Heart right ventricle (tissue), 16 donors: ENCODE measurements at regions of chr1 and their contacts with region 1.

Region 1: GRCh38 chr1:226736908-226737818 is 1.9 kb downstream of the ITPKB start:
- DNase-seq: peak; percentile 42 to 49
- ATAC-seq: peak; percentile 5 to 62 (median 30)
- H3K4me3 ChIP-seq: peak overlapping the region; percentile 54 to 98 (median 82)
- H3K27ac ChIP-seq: peak overlapping the region; percentile 73 to 97 (median 91)
- H3K4me1 ChIP-seq: peaks cover 4 to 60% (median 55%) of the 10 kb centered on the region in 9 donors
- H3K27me3 ChIP-seq: no peaks in the 10 kb centered on the region
- CTCF ChIP-seq: peak in 4 of 9 donors; percentile 13 to 35 (median 17)

Region 2: DNA sequence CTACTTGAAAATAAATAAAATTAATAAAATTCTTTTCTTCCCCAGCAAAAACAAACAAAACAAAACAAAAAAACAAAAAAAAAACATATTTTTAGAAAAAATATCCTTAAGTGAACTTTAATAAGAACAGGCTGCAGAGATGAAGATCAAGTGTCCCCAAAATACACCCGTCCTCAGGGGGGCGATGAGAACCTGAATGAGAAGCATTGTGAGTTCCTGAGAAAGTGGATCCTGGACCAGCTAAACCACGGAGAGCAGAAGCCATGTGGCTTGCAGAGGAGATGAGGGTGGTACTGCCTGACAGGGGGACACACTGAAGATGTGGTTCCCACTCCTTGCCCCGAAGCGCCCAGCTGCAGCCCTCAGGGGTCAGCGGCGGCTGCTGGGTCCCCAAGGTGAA is 87.4 kb before region 1 on chr1:
- intact Hi-C with region 1: loop called in 2 of 10 experiments (anchors 10 kb)
- DNase-seq: no peak
- ATAC-seq: peak in 5 of 8 donors; percentile 13 to 39 (median 25)
- H3K4me3 ChIP-seq: peak overlapping the region in 1 of 10 donors; percentile 5
- H3K27ac ChIP-seq: peak overlapping the region in 6 of 10 donors; percentile 7 to 70 (median 50)
- H3K4me1 ChIP-seq: peaks cover 12 to 47% (median 31%) of the 10 kb centered on the region in 9 donors
- H3K27me3 ChIP-seq: no peaks in the 10 kb centered on the region
- CTCF ChIP-seq: peak in 6 of 9 donors; percentile 11 to 49 (median 38)

Region 3: DNA sequence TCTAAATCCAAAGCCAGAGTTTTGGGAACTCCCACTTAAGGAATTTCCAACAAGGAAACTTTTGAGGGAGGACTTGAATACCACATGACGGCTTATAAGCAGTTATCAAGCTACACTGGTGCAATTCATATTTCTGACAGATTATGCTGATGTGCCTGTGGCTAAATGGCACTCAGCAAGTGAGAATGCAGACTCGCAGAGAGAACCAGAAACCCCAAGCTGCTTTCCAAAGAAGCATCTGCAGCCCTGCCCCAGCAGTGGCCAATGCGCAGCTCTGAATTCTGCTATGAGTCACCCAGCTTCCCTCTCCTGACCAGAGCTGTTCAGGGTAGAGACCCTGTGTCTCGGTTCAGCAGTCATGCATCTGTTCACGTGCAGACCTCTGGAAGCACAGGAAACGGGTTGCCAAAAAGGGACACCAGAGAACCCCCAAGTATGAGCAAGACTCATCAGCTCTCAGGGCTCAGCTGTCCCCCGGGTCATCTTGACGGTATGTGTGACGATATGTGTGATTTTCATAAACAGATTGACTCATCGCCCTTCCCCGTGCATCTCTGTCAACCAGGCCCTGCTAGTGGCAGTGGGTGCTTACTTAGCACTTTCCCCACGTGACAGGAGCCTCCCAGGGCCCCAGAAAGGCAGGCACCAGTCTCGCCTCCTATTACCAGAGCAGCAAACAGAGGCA is 74.4 kb before region 1 on chr1:
- intact Hi-C with region 1: loop called in 9 of 10 experiments (anchors 5 to 10 kb)
- DNase-seq: peak; percentile 54 to 79
- ATAC-seq: peak; percentile 47 to 70 (median 61)
- H3K4me3 ChIP-seq: peak overlapping the region in 4 of 10 donors; percentile 10 to 14 (median 11)
- H3K27ac ChIP-seq: peak overlapping the region in 7 of 10 donors; percentile 7 to 92 (median 86)
- H3K4me1 ChIP-seq: peaks cover 0 to 100% (median 30%) of the 10 kb centered on the region in 9 donors
- H3K27me3 ChIP-seq: no peaks in the 10 kb centered on the region
- CTCF ChIP-seq: no peak

Region 4: GRCh38 chr1:226798427-226799411 is 61.6 kb after region 1 on chr1:
- intact Hi-C with region 1: no loop called
- DNase-seq: no peak
- ATAC-seq: peak; percentile 42 to 91 (median 68)
- H3K4me3 ChIP-seq: no peak overlapping the region
- H3K27ac ChIP-seq: peak overlapping the region in 9 of 10 donors; percentile 6 to 77 (median 52)
- H3K4me1 ChIP-seq: peaks cover 0 to 21% (median 10%) of the 10 kb centered on the region in 9 donors
- H3K27me3 ChIP-seq: no peaks in the 10 kb centered on the region
- CTCF ChIP-seq: no peak

Region 5: DNA sequence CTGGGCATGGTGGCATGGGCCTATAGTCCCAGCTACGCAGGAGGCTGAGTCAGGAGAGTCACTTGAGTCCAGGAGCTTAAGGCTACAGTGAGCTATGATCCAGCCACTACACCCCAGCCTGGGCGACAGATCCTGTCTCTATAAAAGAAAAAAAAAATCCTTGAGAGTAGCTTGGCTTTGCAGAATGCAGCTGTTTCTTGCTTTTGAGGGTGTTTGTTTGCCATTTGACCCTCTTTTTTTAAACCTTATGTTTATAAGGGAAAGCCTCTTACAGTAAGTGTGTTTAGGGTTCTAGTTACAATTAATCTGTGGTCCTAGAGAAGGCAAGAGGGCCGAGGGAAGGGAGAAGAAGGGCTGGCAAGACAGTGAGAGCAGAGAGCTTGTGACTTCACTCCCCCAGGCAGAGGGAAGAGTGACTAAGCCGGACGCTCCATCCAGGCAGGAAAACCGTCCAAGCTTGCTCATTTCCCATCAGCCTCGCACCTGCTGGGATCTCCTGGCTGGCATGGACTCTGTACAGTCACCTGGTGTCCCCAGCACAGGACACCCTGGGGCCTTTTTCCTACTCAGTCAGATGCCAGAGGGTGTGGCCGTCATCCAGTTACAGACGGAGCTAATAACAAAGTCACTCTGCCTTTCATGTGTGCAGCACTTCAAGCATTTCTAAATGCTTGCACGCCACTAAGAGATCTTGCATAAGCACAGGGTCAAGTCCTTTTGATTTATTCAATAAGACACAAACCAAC is 77.8 kb after region 1 on chr1:
- intact Hi-C with region 1: loop called in 6 of 10 experiments (anchors 2 to 10 kb)
- DNase-seq: peak; percentile 23 to 74
- ATAC-seq: peak; percentile 76 to 95 (median 91)
- H3K4me3 ChIP-seq: no peak overlapping the region
- H3K27ac ChIP-seq: peak overlapping the region; percentile 40 to 89 (median 72)
- H3K4me1 ChIP-seq: peaks cover 6 to 50% (median 26%) of the 10 kb centered on the region in 9 donors
- H3K27me3 ChIP-seq: no peaks in the 10 kb centered on the region
- CTCF ChIP-seq: no peak

Region 6: DNA sequence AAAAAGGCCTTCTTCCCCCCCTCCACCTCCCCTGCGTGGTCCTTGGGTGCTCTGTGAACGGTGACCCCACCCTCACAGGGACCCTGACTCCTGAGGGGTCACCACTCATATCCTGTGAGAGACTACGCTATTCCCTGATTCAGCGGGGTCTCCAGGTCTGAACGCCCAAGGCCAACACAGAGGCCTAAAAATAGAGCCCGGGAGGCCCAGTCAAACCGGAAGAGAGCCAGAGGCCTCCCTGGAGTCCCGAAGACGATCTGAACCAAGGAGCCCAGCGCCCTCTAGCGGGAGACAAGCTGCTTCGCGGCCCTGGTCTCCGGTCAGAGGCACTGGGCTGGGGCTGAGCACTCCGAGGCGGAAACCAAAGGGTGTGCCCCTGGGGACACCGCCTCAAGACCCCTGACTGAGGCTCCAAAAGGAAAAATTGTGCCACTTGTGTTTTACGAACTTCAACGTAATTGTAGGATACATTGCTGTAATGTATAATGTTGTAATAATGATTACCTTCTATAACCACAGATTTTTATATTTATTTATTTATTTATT is 90.9 kb after region 1 on chr1:
- intact Hi-C with region 1: loop called (anchors 2 to 10 kb)
- DNase-seq: peak; percentile 95 to 97
- ATAC-seq: peak; percentile 97 to 99 (median 98)
- H3K4me3 ChIP-seq: peak overlapping the region in 8 of 10 donors; percentile 12 to 43 (median 31)
- H3K27ac ChIP-seq: peak overlapping the region in 9 of 10 donors; percentile 73 to 88 (median 84)
- H3K4me1 ChIP-seq: peaks cover 0 to 27% (median 17%) of the 10 kb centered on the region in 9 donors
- H3K27me3 ChIP-seq: no peaks in the 10 kb centered on the region
- CTCF ChIP-seq: peak; percentile 87 to 99 (median 97)